Posterior vena cava (tissue), 2 donors: ENCODE measurements at regions of chr2 and their contacts with region 1.

Region 1: GRCh38 chr2:137715731-137716191 is 248.5 kb upstream of the HNMT start:
- DNase-seq: peak; percentile 44

Region 2: GRCh38 chr2:137693534-137693933 is 22.2 kb before region 1 on chr2:
- intact Hi-C with region 1: loop called in 1 of 2 experiments (anchors 1 kb)
- DNase-seq: no peak

Region 3: DNA sequence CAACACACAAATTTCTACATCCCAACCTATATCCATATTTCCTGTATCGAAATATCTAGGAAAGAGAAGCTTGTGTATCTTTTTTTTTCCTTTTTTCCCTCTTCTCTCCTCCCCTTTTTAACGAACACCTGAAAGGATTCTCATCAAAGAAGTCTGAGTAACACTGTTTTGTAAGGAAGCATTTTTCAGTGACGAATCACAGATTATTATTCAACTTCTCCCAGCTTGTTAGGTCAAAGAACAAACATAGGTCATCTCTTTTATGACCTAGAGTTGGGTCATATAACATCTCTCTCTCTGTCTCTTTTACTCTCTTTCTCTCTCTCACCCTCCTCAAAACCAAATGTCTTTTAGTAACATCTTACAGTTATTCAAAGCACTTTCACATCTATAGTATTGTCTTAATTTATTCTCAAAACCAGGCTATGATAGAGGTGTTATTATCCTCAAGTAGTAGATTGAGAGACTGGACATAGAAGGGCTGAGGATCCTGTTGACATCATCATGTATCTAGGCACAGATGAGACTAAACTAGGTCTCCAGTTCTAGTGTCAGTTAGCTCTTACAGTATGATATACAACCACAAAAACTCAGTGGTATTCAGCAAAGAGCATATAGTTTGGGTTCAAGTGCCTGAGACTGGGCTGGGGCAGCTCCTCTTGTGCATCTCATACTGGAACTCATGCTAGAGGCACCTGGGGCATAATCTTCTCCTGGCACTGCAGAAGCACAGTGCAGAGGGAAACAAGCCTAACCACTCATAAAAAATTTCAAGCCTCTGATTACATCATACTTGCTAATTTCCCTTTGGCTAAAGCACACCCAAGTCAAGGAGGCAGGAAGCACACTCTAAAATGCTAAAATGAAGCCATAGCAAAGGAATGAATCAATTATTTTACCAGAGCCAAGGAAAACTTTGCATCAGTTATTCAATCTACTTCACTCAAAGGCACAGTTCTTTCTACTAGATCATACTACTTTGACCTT is 705.8 kb after region 1 on chr2:
- intact Hi-C with region 1: loop called in 1 of 2 experiments (anchors 5 kb)
- DNase-seq: no peak